ENCODE measurements at regions of chr1 and their contacts with region 1.

Region 1: GRCh38 chr1:8097077-8097799 is 71.1 kb upstream of the ERRFI1 start:
- DNase-seq: peak; percentile 46
- H3K4me3 Mint-ChIP-seq: peak overlapping the region; percentile 41
- H3K27ac Mint-ChIP-seq: peak overlapping the region; percentile 90
- H3K4me1 Mint-ChIP-seq: peaks cover 39% of the 10 kb centered on the region
- H3K27me3 Mint-ChIP-seq: peaks cover 10% of the 10 kb centered on the region

Region 2: DNA sequence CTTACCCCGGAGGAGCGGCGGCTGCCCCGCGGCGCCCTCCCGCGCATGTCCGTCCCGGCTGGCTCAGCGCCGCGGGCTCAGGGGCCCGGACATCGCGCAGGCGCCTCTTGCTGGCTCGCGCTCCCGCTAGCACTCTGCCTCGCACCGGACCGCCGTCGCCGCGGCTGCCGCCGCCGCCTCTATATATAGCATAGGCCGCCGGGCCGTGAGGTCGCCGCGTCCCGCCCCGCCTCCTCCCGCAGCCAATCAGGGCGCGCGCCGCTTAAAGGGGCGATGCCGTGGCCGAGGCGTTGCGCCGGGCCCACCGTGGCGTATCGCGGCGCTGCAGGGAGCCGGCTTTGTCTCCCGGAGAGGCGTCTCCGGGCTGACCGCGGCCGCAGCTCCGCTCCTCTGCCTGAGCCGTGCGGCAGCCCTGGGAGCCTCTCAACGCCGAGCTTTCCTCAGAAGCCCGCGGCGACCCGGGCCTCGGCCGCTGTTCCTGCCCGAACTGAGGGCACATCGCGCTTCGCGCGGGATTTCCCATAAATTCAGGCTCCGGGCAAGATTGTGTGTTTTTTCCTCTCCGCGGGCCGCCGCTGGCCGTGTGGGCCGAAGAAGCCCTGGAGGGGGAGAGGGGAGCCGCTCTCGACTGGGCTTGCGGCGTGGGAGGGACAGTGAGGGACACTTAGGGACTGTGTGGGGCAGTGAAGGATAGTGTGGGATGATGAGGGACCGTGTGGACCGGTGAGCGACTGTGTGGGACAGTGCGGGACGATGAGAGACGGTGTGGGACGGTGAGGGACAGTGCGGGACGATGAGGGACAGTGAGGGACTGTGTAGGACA is 70.9 kb before region 1 on chr1 and contains the start of gene ERRFI1:
- CTCF ChIA-PET with region 1: interaction called, 3 read pairs
- POLR2A ChIA-PET with region 1: no interaction called
- intact Hi-C with region 1: loop called (anchors 5 kb)
- DNase-seq: peak; percentile 91
- H3K4me3 Mint-ChIP-seq: peak within 1 kb of the TSS; percentile 78
- H3K27ac Mint-ChIP-seq: no peak within 1 kb of the TSS
- H3K4me1 Mint-ChIP-seq: peaks cover 12% of the 10 kb centered on the region
- H3K27me3 Mint-ChIP-seq: peaks cover 21% of the 10 kb centered on the region
- total RNA-seq, gene ERRFI1: 1.5 to 1.9 TPM

Region 3: DNA sequence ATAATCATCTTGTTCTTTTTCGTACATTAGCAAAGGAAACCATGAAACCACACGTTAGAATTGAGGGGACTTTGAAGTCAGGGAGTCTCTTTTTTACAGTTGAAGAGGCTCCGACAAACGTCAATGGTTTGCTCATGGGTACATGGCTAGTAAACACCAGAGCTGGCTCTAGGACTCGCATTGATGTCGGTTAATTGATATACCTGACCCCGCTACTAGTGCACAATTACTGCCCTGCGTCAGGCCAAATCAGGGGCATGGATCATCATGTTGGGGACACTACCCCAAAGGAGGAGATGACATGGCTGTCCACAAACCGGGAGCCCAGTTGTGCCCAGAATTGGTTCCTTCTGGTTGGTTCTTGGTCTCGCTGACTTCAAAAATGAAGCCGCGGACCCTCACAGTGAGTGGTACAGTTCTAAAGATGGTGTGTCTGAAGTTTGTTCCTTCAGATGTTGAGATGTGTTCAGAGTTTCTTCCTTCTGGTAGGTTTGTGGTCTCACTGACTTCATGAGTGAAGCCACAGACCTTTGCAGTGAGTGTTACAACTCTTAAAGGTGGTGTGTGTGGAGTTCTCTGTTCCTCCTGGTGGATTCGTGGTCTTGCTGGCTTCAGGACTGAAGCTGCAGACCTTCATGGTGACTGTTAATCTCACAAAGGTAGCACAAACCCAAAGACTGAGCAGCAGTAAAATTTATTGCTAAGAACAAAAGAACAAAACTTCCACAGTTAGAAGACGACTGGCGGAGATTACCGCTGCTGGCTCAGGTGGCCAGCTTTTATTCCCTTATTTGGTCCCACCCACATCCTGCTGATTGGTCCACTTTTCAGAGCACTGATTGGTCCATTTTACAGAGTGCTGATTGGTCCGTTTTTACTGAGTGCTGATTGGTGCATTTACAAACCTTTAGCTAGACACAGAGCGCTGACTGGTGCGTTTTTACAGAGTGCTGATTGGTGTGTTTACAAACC is 55.8 kb after region 1 on chr1:
- CTCF ChIA-PET with region 1: no interaction called
- POLR2A ChIA-PET with region 1: no interaction called
- intact Hi-C with region 1: loop called (anchors 1 kb)
- DNase-seq: peak; percentile 72
- H3K4me3 Mint-ChIP-seq: peak overlapping the region; percentile 69
- H3K27ac Mint-ChIP-seq: peak overlapping the region; percentile 94
- H3K4me1 Mint-ChIP-seq: peaks cover 42% of the 10 kb centered on the region
- H3K27me3 Mint-ChIP-seq: no peaks in the 10 kb centered on the region

Region 4: DNA sequence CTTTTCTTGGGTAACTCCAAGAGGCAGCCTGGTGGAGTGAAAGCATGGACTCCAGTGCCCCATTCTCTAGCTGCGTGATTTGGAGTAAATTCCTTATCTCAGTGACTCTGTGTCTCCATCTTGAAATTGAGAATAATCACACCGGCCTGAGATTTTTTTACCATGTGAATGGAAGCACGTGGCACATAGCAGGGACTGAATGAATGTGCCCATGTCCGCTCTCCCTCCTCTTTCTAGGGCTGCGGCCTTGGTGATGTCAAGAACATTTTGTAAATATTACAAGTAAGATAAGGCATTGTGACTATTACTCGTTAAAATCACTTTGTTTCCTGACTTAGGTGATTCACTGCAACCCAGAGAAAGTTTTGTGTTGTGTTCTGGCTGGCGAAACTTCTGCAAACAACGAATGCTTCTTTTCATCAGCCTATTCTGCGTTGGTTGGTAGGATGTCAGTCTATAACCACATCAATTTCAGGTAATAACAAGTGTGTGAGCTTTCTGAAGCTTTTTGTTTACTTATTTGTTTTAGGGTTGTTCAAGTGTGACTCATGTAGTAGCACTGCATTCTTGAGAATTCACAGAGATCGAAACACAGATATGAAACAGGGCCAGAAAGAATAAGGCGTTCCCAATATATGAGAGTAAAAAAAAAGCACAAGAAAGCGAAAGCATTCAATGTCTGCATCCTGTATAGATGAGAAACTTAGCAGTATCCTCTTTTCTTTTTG is 85.0 kb after region 1 on chr1:
- CTCF ChIA-PET with region 1: no interaction called
- POLR2A ChIA-PET with region 1: interaction called, 3 read pairs
- intact Hi-C with region 1: loop called (anchors 1 kb)
- DNase-seq: peak; percentile 58
- H3K4me3 Mint-ChIP-seq: peak overlapping the region; percentile 24
- H3K27ac Mint-ChIP-seq: peak overlapping the region; percentile 69
- H3K4me1 Mint-ChIP-seq: peaks cover 22% of the 10 kb centered on the region
- H3K27me3 Mint-ChIP-seq: no peaks in the 10 kb centered on the region